ENCODE measurements at regions of chr5 and their contacts with region 1.

Region 1: DNA sequence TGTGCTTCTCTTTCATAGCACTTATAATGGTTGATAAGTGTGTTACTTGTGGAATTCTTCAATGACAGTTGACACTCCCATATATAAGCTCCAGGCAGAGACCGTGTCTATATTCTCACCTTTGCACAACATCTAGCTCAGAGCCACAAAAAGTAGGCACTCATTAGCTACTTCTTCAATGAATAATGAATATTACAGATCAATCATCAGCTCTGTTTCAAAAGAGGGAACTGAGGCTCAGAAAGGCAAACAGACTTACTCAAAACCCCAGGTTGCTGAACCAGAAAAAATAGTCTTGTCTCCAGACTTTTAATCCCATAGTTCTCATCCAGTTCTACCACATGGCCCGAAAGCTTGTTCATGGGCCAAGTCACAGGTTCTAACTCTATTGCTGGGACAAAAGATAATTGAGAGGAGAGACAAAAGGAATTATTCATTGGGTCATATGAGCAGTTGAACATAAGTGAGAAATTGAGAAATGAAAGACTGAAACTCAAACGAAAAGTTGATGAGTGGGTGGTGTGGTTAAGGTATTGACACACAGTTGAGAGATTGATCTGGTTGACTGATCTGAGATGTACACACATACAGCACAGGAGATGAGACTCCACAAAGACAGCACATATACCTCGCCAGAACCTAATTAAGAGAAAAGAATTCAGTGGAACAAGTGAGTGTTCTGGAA is 381.6 kb downstream of the EFNA5 start:
- DNase-seq: no peak
- H3K4me3 Mint-ChIP-seq: no peak overlapping the region
- H3K27ac Mint-ChIP-seq: peak overlapping the region; percentile 49
- H3K4me1 Mint-ChIP-seq: peaks cover 46% of the 10 kb centered on the region
- H3K27me3 Mint-ChIP-seq: peaks cover 4% of the 10 kb centered on the region

Region 2: DNA sequence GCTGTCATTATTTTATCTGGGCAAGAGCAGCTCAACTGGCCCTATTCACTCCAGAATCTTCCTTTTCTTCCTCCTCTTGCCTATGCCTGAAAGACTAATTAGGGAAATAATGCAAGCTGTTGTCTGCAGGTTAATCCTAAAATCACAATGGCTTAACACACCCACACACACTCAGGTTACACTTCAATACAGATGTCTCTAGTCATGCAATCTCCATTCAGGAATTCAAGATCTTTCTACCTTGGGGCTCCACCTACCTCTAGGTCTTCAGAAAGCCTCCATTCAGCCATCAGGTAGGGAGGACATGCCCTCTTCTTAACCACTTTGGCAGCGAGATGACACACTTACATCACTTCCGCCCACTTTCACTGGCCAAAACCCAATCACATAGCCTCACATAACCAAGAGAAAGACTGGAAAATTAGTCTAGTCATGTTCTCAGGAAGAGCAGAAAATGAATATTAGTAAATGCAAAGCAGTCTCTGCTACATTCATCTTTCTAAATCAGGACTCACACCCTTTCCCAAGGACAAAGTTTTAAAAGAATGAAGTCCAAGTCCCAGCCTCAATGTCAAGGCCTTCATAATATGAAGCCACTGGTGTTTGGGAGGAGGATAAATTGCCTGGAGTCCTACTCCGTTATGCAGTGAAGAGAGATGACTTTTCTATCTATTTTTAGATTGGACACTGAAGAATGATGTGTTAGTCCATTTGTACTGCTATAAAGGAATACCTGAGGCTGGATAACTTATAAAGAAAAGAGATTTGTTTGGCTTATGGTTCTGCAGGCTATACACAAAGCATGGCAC is 46.6 kb before region 1 on chr5:
- intact Hi-C with region 1: no loop called
- DNase-seq: no peak
- H3K4me3 Mint-ChIP-seq: no peak overlapping the region
- H3K27ac Mint-ChIP-seq: no peak overlapping the region
- H3K4me1 Mint-ChIP-seq: no peaks in the 10 kb centered on the region
- H3K27me3 Mint-ChIP-seq: no peaks in the 10 kb centered on the region

Region 3: GRCh38 chr5:107263387-107264018 is 25.7 kb before region 1 on chr5:
- intact Hi-C with region 1: loop called (anchors 2 kb)
- DNase-seq: no peak
- H3K4me3 Mint-ChIP-seq: no peak overlapping the region
- H3K27ac Mint-ChIP-seq: peak overlapping the region; percentile 21
- H3K4me1 Mint-ChIP-seq: peaks cover 5% of the 10 kb centered on the region
- H3K27me3 Mint-ChIP-seq: no peaks in the 10 kb centered on the region

Region 4: GRCh38 chr5:107389130-107389774 is 100.1 kb after region 1 on chr5:
- intact Hi-C with region 1: loop called (anchors 1 kb)
- DNase-seq: peak; percentile 23
- H3K4me3 Mint-ChIP-seq: peak overlapping the region; percentile 51
- H3K27ac Mint-ChIP-seq: peak overlapping the region; percentile 77
- H3K4me1 Mint-ChIP-seq: peaks cover 27% of the 10 kb centered on the region
- H3K27me3 Mint-ChIP-seq: peaks cover 6% of the 10 kb centered on the region

Region 5: DNA sequence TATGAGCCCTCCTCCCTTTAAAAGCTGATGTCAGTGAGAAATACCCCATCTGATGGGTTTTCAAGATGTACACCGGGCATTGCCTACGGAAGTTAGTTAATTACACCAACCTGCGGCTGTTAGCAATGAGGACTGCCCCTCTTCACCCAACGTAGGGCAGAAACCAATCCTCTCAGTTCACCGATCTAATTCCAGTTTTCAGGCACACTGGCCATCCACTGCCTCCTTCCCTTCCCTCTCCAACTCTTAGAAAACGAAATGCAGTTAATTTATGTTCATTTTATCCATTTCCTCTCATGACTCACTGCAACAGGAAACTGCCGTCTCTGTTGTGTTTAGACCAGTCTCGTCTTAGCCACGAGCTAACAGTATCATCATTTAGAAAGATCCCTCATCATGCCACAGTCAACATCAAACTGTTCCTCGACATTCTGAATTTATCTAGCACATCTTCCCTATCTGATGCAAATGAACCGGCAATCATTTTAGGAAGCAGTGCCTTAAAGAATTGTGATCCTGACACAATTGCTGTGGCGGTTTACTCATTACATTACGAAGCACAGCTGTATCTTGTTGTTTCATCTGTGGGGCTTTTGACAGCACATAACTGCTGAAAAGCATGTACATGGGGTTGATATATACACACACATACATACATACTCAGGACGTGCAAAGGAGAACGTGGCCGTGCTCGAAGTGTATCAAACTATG is 212.9 kb after region 1 on chr5:
- intact Hi-C with region 1: loop called (anchors 1 kb)
- DNase-seq: no peak
- H3K4me3 Mint-ChIP-seq: peak overlapping the region; percentile 34
- H3K27ac Mint-ChIP-seq: peak overlapping the region; percentile 44
- H3K4me1 Mint-ChIP-seq: peaks cover 13% of the 10 kb centered on the region
- H3K27me3 Mint-ChIP-seq: peaks cover 19% of the 10 kb centered on the region

Region 6: DNA sequence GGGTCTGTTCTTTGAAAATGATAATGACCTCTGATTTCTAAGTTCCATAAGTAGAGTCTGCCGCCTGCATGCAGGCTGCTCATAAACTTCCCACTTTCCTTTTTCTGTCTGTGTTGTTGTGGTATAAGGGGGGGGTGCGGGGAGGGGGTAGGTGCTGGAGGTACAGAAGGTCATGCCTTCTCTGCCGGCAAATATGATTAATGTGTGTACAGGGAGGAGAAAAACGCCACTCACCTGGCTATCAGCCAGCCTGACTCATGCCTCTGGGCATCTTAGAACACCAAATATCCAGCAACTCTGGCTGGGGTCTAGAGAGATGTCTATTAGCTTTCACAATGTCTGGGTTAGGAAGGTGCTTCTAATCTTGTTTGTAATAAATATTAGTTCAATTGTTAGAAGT is 253.3 kb after region 1 on chr5:
- intact Hi-C with region 1: no loop called
- DNase-seq: no peak
- H3K4me3 Mint-ChIP-seq: no peak overlapping the region
- H3K27ac Mint-ChIP-seq: no peak overlapping the region
- H3K4me1 Mint-ChIP-seq: peaks cover 5% of the 10 kb centered on the region
- H3K27me3 Mint-ChIP-seq: peaks cover 13% of the 10 kb centered on the region

Region 7: GRCh38 chr5:107919969-107920368 is 630.8 kb after region 1 on chr5:
- intact Hi-C with region 1: loop called (anchors 5 kb)
- DNase-seq: no peak
- H3K4me3 Mint-ChIP-seq: peak overlapping the region; percentile 38
- H3K27ac Mint-ChIP-seq: peak overlapping the region; percentile 75
- H3K4me1 Mint-ChIP-seq: peaks cover 71% of the 10 kb centered on the region
- H3K27me3 Mint-ChIP-seq: no peaks in the 10 kb centered on the region